Caco-2 (cell line): ENCODE measurements at regions of chr3 and their contacts with region 1.

Region 1: DNA sequence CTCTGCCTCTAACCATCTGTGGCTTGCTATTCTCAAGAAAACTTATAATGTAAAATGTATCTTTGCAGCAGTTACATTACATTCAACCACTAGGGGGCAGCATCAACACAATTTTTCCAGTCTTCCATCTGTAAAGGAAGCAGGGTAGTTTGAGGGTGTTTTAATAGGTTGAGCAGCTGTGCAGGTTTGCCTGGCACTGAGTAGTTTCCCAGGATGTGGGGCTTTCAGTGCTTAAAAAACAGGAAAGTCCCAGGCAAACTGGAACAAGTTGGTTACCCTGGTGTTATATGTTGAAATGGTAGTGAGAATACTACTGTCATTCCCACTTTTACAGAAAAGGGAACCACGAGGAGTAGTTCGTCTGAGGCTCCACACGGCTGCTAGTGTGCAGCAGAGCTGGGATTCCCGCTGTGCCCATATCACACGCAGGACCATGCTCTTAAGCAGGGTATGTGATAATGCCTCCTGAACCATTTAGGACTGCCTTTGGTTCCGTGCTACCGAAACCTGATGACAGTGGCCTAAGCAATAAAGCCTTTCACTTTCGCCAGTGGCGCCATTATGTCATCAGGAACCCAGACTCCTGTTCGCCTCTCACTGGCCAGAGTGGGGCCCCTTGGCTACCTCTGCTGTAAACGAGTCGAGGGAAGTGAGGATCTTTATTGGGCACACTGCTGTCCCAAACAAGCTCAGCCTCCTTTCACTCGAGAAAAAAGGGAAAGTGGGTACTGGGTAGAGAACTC is 64.7 kb upstream of the ZBTB38 start:
- DNase-seq: peak; percentile 56 to 77
- H3K4me3 ChIP-seq: no peak overlapping the region
- H3K4me3 Mint-ChIP-seq: no peak overlapping the region
- H3K27ac Mint-ChIP-seq: no peak overlapping the region
- H3K4me1 ChIP-seq: no peaks in the 10 kb centered on the region; the same call in 1 of the 2 replicates
- H3K4me1 Mint-ChIP-seq: no peaks in the 10 kb centered on the region
- H3K27me3 ChIP-seq: no peaks in the 10 kb centered on the region
- H3K27me3 Mint-ChIP-seq: no peaks in the 10 kb centered on the region
- CTCF ChIP-seq: peak; percentile 61 to 68

Region 2: GRCh38 chr3:141421639-141422330 is 118.1 kb after region 1 on chr3:
- CTCF ChIA-PET with region 1: no interaction called
- POLR2A ChIA-PET with region 1: no interaction called
- intact Hi-C with region 1: no loop called
- DNase-seq: no peak
- H3K4me3 ChIP-seq: no peak overlapping the region
- H3K4me3 Mint-ChIP-seq: no peak overlapping the region
- H3K27ac Mint-ChIP-seq: no peak overlapping the region
- H3K4me1 ChIP-seq: peaks cover 21% of the 10 kb centered on the region
- H3K4me1 Mint-ChIP-seq: peaks cover 35% of the 10 kb centered on the region
- H3K27me3 ChIP-seq: no peaks in the 10 kb centered on the region
- H3K27me3 Mint-ChIP-seq: no peaks in the 10 kb centered on the region
- CTCF ChIP-seq: no peak

Region 3: DNA sequence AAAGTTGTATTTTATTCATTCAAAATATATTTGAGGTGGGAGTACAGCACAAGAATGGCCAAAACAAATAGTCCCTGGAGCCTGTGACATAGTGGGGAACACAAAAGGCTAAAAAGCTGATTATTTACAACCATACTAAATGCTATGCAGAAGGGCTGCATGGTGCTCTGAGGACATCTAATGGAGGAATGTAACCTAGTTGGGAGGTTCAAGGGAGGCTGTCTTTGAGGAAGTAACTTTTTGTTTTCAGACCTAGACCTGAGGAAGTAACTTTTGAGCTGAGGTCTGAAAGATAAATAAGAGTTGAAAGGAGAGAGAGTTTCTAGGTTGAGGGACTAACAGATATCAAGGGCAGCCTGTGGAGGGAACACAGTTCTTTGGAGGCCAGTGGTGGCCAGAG is 148.4 kb after region 1 on chr3:
- CTCF ChIA-PET with region 1: interaction called, 20 read pairs
- POLR2A ChIA-PET with region 1: interaction called, 5 read pairs
- intact Hi-C with region 1: loop called (anchors 1 kb)
- DNase-seq: peak; percentile 51 to 61
- H3K4me3 ChIP-seq: no peak overlapping the region
- H3K4me3 Mint-ChIP-seq: no peak overlapping the region
- H3K27ac Mint-ChIP-seq: no peak overlapping the region
- H3K4me1 ChIP-seq: peaks cover 44% of the 10 kb centered on the region
- H3K4me1 Mint-ChIP-seq: peaks cover 25% of the 10 kb centered on the region
- H3K27me3 ChIP-seq: no peaks in the 10 kb centered on the region
- H3K27me3 Mint-ChIP-seq: no peaks in the 10 kb centered on the region
- CTCF ChIP-seq: peak; percentile 46 to 64